Activated naive CD4-positive, alpha-beta T cell treated with anti-CD3 and anti-CD28 coated beads for 36 hours (primary cell): ENCODE measurements at regions of chr2 and their contacts with region 1.

Region 1: DNA sequence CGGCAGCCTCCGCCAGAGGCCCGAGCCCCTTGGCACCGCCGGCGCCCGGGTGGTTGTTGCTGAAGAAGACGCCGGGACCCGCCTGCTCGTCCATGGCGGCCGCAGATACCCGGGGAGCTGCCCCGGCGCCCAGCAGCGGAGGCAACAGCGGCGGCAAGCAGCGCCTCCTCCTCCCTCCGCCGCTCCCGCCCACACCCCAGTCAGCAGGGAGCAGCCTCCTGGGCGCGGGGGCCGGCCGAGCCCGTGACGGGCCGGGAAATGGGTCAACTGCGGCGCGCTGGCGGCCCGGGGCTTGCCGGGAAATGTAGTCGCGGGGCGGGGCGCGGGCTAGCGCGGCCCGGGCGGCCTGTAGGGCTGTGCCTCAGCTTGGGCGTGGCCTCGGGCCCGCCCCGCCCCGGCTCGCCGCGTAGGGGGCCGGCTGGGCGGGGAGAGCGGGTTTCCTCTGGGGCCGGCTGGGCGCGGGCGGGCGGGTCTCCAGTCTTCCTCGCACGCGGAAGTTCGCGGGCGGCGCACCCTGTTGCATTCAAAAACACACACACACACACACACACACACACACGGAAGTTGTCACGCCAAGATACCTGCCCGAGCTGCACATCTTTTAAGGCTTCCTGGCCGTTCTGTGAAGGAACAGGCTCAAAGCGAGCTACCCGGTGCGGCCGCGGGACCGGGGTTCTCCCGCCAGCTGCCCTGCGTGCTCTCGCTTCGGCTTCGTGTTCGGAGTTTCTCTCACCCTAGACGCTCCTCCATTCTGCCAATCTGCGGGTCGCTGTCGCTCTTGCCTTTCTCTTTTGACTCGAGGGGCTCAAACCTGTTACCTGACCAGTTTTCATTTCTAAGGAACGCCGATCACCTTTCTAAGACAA is at the start of gene STRN:
- DNase-seq: peak; percentile 96
- H3K4me3 Mint-ChIP-seq: peak within 1 kb of the TSS; percentile 94
- H3K27ac Mint-ChIP-seq: peak within 1 kb of the TSS; percentile 90
- H3K4me1 Mint-ChIP-seq: peaks cover 33% of the 10 kb centered on the region
- H3K27me3 Mint-ChIP-seq: no peaks in the 10 kb centered on the region
- total RNA-seq, gene STRN: 19.3 to 22.2 TPM

Region 2: DNA sequence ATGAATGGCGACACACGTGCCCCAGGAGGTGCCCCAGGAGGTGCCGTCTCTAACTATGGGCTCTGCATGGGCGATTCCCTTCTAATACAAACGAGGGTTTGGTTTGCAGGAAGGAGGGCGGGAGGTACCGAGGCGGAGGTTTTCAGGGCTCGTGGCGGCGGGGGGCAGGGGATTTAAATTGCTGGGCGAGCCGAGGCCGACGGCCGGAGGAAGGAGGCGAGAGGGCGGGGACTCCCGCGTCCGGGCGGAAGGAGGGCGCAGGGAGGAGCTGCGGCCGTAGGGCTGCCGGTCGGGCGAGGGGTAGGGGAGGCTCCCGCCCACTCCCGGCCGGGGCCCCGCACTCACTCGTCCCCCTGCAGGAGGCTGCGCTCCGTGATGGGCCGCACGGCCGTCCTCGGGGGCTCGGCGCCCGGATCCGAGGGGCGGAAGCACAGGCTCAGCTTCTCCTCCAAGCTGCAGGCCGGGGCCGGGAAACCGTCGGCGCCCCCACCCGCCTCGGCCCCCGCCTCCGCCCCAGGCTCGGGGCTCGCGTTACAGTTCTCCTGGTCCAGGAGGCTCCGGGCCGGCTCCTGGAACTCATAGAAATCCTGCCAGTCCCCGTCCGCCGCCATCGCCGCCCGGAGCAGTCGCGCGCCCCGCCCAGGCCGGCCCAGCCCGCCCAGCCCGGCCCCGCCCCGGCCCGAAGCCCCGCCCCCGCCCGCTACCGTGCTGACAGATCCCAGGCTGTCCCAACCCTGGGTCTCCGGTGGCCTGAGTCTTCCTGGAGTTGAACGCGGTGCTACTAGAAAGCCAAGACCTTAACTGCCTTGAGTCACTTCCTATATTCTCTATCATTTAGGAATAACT is 368.8 kb before region 1 on chr2 and contains the start of gene FEZ2:
- CTCF ChIA-PET with region 1: no interaction called
- intact Hi-C with region 1: loop called (anchors 5 kb)
- DNase-seq: peak; percentile 69
- H3K4me3 Mint-ChIP-seq: peak within 1 kb of the TSS; percentile 90
- H3K27ac Mint-ChIP-seq: peak within 1 kb of the TSS; percentile 80
- H3K4me1 Mint-ChIP-seq: peaks cover 21% of the 10 kb centered on the region
- H3K27me3 Mint-ChIP-seq: no peaks in the 10 kb centered on the region
- total RNA-seq, gene FEZ2: 6.5 to 8.2 TPM

Region 3: GRCh38 chr2:37005118-37005868 is 38.7 kb after region 1 on chr2:
- CTCF ChIA-PET with region 1: no interaction called
- intact Hi-C with region 1: loop called (anchors 1 kb)
- DNase-seq: peak; percentile 54
- H3K4me3 Mint-ChIP-seq: peak overlapping the region; percentile 23
- H3K27ac Mint-ChIP-seq: peak overlapping the region; percentile 26
- H3K4me1 Mint-ChIP-seq: peaks cover 10% of the 10 kb centered on the region
- H3K27me3 Mint-ChIP-seq: no peaks in the 10 kb centered on the region

Region 4: GRCh38 chr2:37156857-37157714 is 190.5 kb after region 1 on chr2 and contains the start of gene EIF2AK2:
- CTCF ChIA-PET with region 1: no interaction called
- intact Hi-C with region 1: loop called (anchors 2 kb)
- DNase-seq: peak; percentile 80
- H3K4me3 Mint-ChIP-seq: peak within 1 kb of the TSS; percentile 86
- H3K27ac Mint-ChIP-seq: peak within 1 kb of the TSS; percentile 85
- H3K4me1 Mint-ChIP-seq: peaks cover 30% of the 10 kb centered on the region
- H3K27me3 Mint-ChIP-seq: no peaks in the 10 kb centered on the region
- total RNA-seq, gene EIF2AK2: 54.5 to 55.7 TPM

Region 5: GRCh38 chr2:37324786-37325624 is 358.4 kb after region 1 on chr2 and contains the start of gene PRKD3:
- CTCF ChIA-PET with region 1: no interaction called
- intact Hi-C with region 1: loop called (anchors 1 kb)
- DNase-seq: peak; percentile 51
- H3K4me3 Mint-ChIP-seq: peak within 1 kb of the TSS; percentile 93
- H3K27ac Mint-ChIP-seq: peak within 1 kb of the TSS; percentile 84
- H3K4me1 Mint-ChIP-seq: peaks cover 29% of the 10 kb centered on the region
- H3K27me3 Mint-ChIP-seq: peaks cover 17% of the 10 kb centered on the region
- total RNA-seq, gene PRKD3: 13.0 TPM

Region 6: GRCh38 chr2:37337642-37338310 is 371.2 kb after region 1 on chr2:
- CTCF ChIA-PET with region 1: no interaction called
- intact Hi-C with region 1: no loop called
- DNase-seq: no peak
- H3K4me3 Mint-ChIP-seq: no peak overlapping the region
- H3K27ac Mint-ChIP-seq: no peak overlapping the region
- H3K4me1 Mint-ChIP-seq: no peaks in the 10 kb centered on the region
- H3K27me3 Mint-ChIP-seq: peaks cover 7% of the 10 kb centered on the region